ENCODE measurements at regions of chr20 and their contacts with region 1.

Region 1: DNA sequence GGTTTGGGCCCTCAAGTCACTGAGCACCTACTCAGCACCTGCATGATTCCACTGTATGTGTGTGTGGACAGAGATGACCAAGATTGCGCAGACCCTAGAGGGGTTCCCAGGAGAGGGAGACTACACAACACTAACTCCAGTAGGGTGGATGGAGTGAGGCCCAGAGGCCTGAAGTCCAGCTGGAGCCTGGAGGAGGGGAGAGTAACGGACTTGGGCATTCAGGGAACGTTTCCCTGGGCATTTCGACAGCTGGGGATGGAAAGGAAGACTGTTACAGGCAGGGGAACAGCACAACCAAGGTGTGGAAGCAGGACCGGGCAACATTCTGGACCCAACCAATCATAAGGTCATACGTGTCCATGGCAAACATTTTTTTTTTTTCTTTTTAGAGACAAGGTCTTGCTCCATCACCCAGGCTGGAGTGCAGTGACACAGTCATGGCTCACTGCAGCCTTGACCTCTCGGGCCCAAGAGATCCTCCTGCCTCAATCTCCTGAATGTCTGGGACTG is 11.1 kb upstream of the CEBPB start:
- DNase-seq: no peak
- ATAC-seq: peak; percentile 20
- H3K4me3 Mint-ChIP-seq: no peak overlapping the region
- H3K27ac Mint-ChIP-seq: no peak overlapping the region
- H3K4me1 Mint-ChIP-seq: no peaks in the 10 kb centered on the region
- H3K27me3 Mint-ChIP-seq: peaks cover 5% of the 10 kb centered on the region
- CTCF ChIP-seq: peak; percentile 56

Region 2: GRCh38 chr20:50115591-50116372 is 63.8 kb before region 1 on chr20:
- CTCF ChIA-PET with region 1: interaction called, 62 read pairs
- POLR2A ChIA-PET with region 1: interaction called, 3 read pairs
- intact Hi-C with region 1: no loop called
- DNase-seq: peak; percentile 96
- ATAC-seq: peak; percentile 79
- H3K4me3 Mint-ChIP-seq: peak overlapping the region; percentile 94
- H3K27ac Mint-ChIP-seq: peak overlapping the region; percentile 93
- H3K4me1 Mint-ChIP-seq: peaks cover 44% of the 10 kb centered on the region
- H3K27me3 Mint-ChIP-seq: no peaks in the 10 kb centered on the region
- CTCF ChIP-seq: no peak

Region 3: DNA sequence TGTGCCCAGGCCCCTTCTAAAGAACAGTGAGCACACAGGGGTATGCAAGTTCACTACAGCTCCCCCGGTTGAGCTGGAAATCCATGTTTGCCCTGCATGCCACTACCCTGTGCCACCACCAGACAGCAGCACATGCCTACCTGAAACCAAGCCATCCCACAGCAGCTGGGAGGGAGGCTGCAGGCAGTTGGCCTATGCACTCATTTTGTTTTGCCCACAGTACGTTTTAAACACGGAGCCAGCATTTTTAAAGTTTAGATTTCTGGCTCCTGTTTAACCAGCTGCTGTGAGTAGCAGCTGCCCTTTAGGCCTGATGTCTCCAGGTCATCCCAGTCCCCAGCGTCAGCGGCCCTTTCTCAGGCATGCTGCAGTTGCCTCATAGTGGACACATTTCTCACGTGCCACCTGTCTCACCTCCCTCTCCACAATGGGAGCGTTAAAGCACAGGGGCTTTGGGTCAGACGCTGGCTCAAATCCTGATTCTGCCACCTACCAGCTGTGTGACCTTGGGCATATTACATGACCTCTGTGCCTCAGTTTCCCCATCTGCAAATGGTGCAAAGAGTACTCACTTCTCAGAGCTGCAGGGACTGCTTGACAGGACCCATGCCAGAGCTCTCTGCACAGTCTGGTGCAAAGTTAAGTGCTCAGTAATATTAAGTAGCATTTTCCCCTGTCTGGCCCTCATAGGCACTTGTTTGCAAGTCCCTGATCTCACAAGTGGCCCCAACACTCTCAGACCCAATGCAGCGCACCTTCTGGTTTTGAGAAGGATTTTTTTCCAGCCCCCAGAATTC is 58.5 kb before region 1 on chr20:
- CTCF ChIA-PET with region 1: interaction called, 62 read pairs
- POLR2A ChIA-PET with region 1: interaction called, 3 read pairs
- intact Hi-C with region 1: no loop called
- DNase-seq: peak; percentile 75
- ATAC-seq: peak; percentile 80
- H3K4me3 Mint-ChIP-seq: no peak overlapping the region
- H3K27ac Mint-ChIP-seq: no peak overlapping the region
- H3K4me1 Mint-ChIP-seq: peaks cover 8% of the 10 kb centered on the region
- H3K27me3 Mint-ChIP-seq: no peaks in the 10 kb centered on the region
- CTCF ChIP-seq: peak; percentile 70

Region 4: GRCh38 chr20:50153485-50154377 is 25.8 kb before region 1 on chr20 and contains the start of gene PEDS1:
- CTCF ChIA-PET with region 1: interaction called, 27 read pairs
- POLR2A ChIA-PET with region 1: no interaction called
- intact Hi-C with region 1: no loop called
- DNase-seq: peak; percentile 84
- ATAC-seq: peak; percentile 96
- H3K4me3 Mint-ChIP-seq: peak within 1 kb of the TSS; percentile 85
- H3K27ac Mint-ChIP-seq: peak within 1 kb of the TSS; percentile 84
- H3K4me1 Mint-ChIP-seq: peaks cover 35% of the 10 kb centered on the region
- H3K27me3 Mint-ChIP-seq: no peaks in the 10 kb centered on the region
- CTCF ChIP-seq: no peak
- total RNA-seq, gene PEDS1: 16.0 to 17.3 TPM

Region 5: DNA sequence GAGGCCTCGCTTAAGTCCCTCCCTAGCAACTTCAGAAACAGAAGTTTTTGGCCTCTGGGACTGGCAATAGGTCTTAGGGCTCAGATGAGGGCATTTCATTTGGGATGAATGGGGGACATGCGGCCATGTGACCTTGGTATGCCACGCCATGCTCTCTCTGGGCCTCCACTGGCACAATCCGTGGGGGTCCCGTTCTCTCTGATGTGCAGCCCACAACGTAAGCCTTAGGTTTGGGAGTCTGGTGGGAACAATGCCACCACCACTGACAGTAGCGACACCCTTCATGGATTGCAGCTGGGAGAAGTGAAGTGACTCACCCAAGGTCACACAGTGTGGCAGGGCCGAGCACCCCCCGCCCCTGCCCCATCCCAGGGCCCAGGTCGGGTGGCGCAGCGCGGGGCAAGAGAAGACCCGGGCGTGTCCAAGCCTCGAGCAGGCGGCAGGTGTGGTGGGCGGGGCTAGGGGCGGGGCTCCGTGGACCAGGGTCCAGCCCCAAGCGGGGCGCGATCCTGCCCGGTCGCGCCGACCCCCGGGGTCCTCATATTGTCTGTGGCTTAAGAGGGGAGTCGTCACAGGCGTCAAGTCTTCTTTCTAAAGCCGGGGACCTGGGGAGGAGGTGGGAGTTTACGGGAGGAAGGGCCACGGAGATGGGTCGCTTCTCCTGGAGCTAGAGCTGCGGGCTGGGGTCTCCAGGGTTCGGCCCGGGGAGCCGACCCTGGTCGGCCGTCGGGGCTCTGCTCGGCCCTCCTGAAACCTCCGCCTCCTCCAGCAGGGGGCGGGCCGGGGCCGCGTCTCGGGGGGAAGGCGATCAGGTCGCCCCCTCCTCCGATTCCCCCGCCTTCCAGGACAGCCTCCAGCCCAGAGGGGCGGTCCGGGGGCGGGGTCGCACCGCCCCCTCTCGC is 10.4 kb after region 1 on chr20:
- CTCF ChIA-PET with region 1: interaction called, 12 read pairs
- POLR2A ChIA-PET with region 1: no interaction called
- intact Hi-C with region 1: no loop called
- DNase-seq: peak; percentile 87
- ATAC-seq: peak; percentile 64
- H3K4me3 Mint-ChIP-seq: peak overlapping the region; percentile 35
- H3K27ac Mint-ChIP-seq: no peak overlapping the region
- H3K4me1 Mint-ChIP-seq: peaks cover 17% of the 10 kb centered on the region
- H3K27me3 Mint-ChIP-seq: peaks cover 9% of the 10 kb centered on the region
- CTCF ChIP-seq: peak; percentile 68

Region 6: GRCh38 chr20:50460460-50461267 is 281.1 kb after region 1 on chr20:
- CTCF ChIA-PET with region 1: interaction called, 61 read pairs
- POLR2A ChIA-PET with region 1: no interaction called
- intact Hi-C with region 1: no loop called
- DNase-seq: peak; percentile 89
- ATAC-seq: peak; percentile 92
- H3K4me3 Mint-ChIP-seq: no peak overlapping the region
- H3K27ac Mint-ChIP-seq: no peak overlapping the region
- H3K4me1 Mint-ChIP-seq: peaks cover 3% of the 10 kb centered on the region
- H3K27me3 Mint-ChIP-seq: peaks cover 5% of the 10 kb centered on the region
- CTCF ChIP-seq: peak; percentile 86